ENCODE measurements at regions of chr6 and their contacts with region 1.

Region 1: GRCh38 chr6:149922642-149923326 is at the start of gene RAET1G:
- DNase-seq: peak; percentile 81 to 92 (median 88)
- ATAC-seq: peak; percentile 79 to 90 (median 86)
- H3K4me3 ChIP-seq: peak within 1 kb of the TSS; percentile 10 to 61 (median 26)
- H3K27ac ChIP-seq: no peak within 1 kb of the TSS
- H3K4me1 ChIP-seq: peaks cover 0 to 3% (median 0%) of the 10 kb centered on the region in 3 donors
- H3K27me3 ChIP-seq: no peaks in the 10 kb centered on the region
- CTCF ChIP-seq: no peak
- total RNA-seq, gene RAET1G: 0.31 TPM in 1 of 6 donors, not detected in the others

Region 2: GRCh38 chr6:149834513-149835481 is 88.0 kb before region 1 on chr6:
- intact Hi-C with region 1: loop called in 1 of 3 experiments (anchors 5 kb)
- DNase-seq: peak in 2 of 6 donors; percentile 32 to 74
- ATAC-seq: peak; percentile 50 to 91 (median 84)
- H3K4me3 ChIP-seq: no peak overlapping the region
- H3K27ac ChIP-seq: no peak overlapping the region
- H3K4me1 ChIP-seq: no peaks in the 10 kb centered on the region
- H3K27me3 ChIP-seq: no peaks in the 10 kb centered on the region
- CTCF ChIP-seq: peak; percentile 73 to 90 (median 88)

Region 3: DNA sequence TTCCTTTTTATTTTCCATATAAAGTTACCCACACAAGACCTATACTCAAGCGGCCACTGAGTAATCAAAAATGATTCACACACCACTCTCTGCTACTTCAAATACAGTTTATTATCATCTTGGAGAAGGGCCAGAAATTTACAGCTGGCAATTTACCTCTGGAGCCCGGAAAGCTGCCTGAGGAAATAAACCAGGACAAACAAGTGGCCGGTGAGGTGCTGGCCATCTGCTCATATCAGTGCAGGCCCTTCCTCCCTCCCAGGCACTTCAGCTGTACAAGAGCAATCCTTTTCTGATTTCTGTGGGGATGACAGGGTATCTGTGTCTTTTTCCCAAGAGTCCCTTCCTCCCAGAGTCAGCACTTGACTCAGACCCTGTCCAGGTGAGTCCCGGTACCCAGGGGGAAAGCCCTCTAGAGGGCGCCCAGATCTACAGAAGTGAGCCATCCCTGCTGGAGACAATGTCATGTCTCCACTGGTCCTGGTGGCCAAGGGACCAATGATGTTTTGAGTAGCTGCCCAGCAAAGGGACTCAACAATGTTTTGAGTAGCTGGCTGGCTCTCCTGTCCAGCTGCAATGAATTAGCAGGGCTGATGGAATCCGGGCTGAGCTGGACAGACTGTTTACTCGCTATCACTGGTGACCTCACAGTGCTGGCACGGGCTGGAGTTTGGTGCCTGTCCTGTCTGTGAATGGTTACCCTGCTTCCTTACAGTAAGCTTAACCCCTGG is 82.3 kb before region 1 on chr6:
- intact Hi-C with region 1: loop called in 2 of 3 experiments (anchors 5 kb)
- DNase-seq: peak; percentile 78 to 90 (median 84)
- ATAC-seq: peak; percentile 96 to 98 (median 98)
- H3K4me3 ChIP-seq: no peak overlapping the region
- H3K27ac ChIP-seq: peak overlapping the region in 3 of 4 donors; percentile 31 to 84 (median 69)
- H3K4me1 ChIP-seq: peaks cover 3 to 13% (median 12%) of the 10 kb centered on the region in 3 donors
- H3K27me3 ChIP-seq: no peaks in the 10 kb centered on the region
- CTCF ChIP-seq: peak in 1 of 4 donors; percentile 10

Measured in pancreas (tissue), 10 donors.